ENCODE measurements at regions of chr5 and their contacts with region 1.

Region 1: DNA sequence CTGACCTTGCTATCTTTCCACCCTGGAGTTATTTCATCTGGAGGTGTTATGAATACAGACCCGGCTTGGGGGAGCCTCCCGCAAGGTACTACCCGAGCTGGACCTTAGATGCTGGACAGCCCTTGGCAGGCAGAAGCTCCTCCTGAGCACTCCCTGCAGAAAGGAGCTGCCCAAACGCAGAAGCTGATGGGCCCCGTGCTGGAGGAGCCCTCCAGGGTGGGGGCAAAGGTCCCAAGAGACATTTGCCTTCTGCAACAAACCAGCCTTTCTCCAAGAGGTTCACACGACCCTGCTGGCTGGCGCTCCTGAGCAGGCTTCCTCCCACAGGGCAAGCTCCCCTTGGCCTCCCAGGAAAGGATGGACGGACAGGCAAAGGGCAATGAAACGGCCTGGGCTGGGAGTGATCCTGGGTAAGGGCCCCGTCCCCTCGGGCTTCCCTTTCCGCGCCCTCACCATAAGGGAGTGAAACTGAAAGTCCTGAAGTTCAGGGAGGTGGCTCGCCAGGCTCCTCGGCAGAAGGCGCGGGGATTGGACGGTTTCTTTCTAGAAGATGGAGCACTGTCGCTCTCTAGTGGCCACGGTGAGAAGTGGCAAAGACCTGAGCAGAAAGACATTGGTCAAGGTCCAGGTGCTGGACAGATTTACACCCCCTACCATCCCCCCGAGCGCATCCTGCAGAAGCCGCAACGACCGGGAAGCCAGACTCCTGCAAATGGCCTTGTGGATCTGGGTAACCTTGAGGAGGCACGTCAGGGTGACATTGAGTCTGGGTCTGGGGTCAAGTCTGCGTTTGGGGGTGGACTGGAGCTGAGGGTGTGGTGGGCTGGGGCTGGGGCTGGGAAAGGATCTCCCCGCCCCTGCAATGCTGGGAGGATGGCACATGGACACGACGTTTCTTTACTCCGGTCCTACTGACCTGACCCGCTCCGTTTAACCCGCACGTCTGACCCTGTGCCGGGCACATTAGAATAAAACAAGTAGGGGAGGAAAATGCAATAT is 56.4 kb downstream of the NEURL1B start:
- DNase-seq: peak; percentile 94

Region 2: DNA sequence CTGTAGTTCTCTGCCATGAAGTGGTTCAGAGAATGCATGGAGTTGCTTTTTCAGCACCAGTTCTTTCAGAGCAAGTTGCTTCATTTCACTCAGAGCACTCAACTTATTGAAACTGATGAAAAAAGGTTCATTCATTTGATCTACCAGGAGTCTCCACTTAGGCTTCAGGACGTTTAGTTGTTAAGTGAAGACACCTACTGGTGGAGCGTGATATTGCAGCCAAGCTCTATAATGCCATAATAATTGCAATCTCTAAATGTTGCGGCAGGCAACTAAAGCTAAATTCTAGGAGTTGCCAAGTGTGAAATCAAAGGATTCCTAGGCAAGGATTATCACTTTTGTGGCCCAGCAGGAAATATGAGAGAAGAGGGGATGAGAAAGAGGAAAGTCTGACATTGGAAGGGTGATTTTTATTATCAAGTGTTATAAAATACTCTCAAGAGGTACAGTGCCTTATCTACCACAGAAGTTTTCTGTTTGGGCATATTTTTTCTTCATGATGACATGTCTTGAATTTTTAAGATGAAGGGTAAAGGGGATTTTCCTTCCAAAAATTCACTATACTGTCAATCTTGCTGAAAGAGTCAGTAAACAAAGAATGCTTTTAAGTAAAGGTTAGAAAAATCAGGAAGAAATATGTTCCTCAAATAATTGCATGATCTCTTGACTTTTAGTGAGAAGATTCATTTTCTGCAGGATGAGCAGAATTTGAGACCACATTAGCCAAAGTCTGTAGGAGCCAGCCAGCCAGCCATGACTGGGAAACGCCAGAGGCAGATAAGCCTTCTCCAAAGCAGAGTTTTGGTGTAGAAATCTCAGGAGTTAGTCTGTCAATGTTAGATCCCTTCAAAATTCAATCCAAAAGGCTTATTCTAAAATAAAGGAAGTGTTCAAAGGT is 326.5 kb before region 1 on chr5:
- intact Hi-C with region 1: no loop called
- DNase-seq: no peak

Region 3: DNA sequence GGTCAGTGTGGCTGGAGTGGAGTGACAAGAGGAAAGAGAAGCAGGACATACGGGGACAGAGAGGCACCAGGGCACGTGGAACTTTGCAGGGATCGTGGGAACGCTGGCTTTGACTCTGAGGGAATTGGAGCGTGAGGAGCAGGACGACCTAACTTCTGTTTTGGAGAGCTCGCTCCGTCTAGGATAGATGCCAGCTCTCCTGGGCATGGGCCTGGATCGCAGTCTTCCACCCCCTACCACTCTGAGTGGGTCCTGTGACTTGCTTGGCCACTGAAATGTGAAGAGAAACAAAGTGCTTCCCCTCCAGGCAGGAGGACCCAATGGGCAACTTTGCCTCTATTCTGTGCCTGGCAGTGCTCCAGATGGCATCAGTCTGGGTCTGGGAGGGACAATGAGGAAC is 234.4 kb before region 1 on chr5:
- intact Hi-C with region 1: loop called (anchors 5 kb)
- DNase-seq: no peak

Region 4: GRCh38 chr5:172479044-172479783 is 218.2 kb before region 1 on chr5:
- intact Hi-C with region 1: loop called (anchors 1 kb)
- DNase-seq: peak; percentile 86

Region 5: GRCh38 chr5:172559004-172559932 is 138.2 kb before region 1 on chr5:
- intact Hi-C with region 1: loop called (anchors 5 kb)
- DNase-seq: no peak

Region 6: DNA sequence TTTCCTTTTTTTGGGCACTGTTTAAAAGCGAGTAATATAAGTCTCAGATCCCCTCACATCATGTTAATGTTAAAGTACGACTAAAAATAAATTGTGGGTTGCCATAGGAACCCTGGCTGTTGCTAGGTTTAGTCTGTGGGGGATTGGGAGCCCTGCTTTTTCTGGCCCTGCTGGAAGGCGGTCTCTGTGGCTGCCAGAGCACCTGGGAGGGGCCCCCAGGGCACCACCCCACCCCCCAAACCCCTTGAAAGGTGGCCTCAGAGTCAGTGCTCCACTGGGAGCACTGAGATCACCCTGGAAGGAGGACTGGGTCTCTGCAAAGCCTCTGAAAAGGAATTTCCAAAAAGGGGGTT is 122.6 kb before region 1 on chr5:
- intact Hi-C with region 1: no loop called
- DNase-seq: no peak

Region 7: GRCh38 chr5:172640822-172641358 is 56.5 kb before region 1 on chr5 and contains the start of gene NEURL1B:
- intact Hi-C with region 1: loop called (anchors 2 kb)
- DNase-seq: peak; percentile 84
- total RNA-seq, gene NEURL1B: 19.7 TPM

Region 8: GRCh38 chr5:172659909-172660628 is 37.4 kb before region 1 on chr5:
- intact Hi-C with region 1: loop called (anchors 2 kb)
- DNase-seq: peak; percentile 94

Region 9: DNA sequence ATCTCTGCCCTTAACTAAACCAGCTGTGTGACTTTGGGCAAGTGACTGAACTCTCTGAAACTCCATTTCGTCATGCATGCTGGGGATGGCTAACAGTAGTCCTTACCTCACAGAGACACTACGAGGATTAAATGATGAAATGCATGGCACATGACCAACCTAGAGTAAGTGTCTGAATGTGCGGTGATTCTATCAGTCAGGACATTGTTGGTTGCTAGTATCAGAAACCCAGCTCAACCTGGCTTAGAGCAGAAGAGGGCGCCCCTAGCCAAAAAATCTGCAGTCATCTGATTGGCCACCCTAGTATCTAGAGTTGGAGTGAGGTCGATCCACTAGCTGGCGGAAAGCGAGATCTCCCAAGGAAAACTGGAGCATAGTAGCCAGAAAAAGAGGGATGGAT is 31.2 kb before region 1 on chr5:
- intact Hi-C with region 1: loop called (anchors 1 kb)
- DNase-seq: no peak

Measured in cardiac septum (tissue), 1 donor.